AG04450 (cell line): ENCODE measurements at regions of chr6 and their contacts with region 1.

Region 1: DNA sequence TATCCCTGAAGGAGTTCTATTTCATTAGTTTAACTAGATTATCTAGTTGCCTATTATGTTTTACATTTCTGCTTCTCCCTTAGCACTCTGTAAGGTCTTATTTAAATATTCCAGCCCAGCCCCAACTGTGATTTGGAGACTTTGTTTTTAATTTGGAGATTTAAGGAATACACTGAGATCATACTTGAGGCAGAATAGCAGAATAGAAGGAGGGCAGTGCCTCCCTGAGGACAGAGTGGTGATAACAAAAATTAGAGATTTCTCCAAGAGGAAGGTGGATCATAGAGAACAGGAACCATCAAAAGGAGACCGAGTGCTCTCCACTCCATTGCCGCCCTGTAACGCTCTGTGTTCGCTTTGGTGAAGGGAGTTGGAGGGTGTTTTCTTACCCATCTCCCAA is 14.8 kb upstream of the CD164 start:
- DNase-seq: no peak
- H3K4me3 ChIP-seq: no peak overlapping the region
- H3K27ac ChIP-seq: no peak overlapping the region
- H3K27me3 ChIP-seq: peaks cover 7% of the 10 kb centered on the region
- CTCF ChIP-seq: peak; percentile 64

Region 2: DNA sequence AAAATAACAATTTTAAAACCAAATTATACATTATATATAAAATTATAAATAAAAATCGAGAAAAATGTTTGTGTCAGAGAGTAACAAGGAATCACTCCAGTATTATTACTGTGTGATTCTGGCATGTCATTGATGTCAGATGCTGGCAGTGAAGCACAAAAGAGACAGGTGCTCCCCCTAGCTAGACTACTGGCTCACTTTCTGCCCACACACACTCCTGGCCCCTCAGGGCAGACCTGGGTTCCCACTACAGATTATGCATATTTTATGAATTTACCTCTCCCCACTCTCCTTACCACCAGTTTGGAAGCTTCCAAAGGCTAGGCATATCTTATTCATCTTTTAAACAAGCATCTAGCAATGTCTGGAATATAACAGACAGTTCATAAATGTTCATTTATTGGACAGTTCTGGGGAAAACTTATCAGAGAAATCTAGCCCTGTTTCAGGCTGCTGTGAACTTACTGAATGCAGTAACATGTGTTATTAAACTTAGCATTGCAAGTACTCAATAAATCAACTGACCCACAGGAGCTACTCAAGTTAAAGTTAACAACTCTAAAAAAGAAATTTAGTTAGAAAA is 1149.0 kb before region 1 on chr6:
- CTCF ChIA-PET with region 1: interaction called, 10 read pairs
- POLR2A ChIA-PET with region 1: no interaction called
- DNase-seq: no peak
- H3K4me3 ChIP-seq: no peak overlapping the region
- H3K27ac ChIP-seq: no peak overlapping the region
- H3K27me3 ChIP-seq: no peaks in the 10 kb centered on the region
- CTCF ChIP-seq: no peak

Region 3: DNA sequence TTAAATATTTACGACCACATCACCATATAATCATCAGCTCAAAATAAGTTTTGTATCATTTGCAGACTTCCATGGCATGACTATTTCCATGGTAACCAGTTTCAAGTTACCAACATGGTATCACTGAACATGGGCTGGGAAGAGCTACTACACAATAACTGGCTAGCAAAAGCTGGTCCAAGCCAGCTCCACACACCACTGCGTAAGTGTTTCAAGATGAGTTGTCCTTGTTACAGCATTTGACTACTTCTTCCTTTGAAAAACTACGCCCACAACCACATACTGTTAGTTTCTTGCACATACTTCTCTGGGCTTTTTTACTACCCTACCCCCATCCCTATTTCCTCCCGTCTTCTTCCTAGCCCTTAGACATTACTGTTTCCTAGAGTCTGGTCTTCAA is 23.3 kb before region 1 on chr6:
- CTCF ChIA-PET with region 1: no interaction called
- POLR2A ChIA-PET with region 1: no interaction called
- DNase-seq: no peak
- H3K4me3 ChIP-seq: no peak overlapping the region
- H3K27ac ChIP-seq: no peak overlapping the region
- H3K27me3 ChIP-seq: no peaks in the 10 kb centered on the region
- CTCF ChIP-seq: no peak

Region 4: DNA sequence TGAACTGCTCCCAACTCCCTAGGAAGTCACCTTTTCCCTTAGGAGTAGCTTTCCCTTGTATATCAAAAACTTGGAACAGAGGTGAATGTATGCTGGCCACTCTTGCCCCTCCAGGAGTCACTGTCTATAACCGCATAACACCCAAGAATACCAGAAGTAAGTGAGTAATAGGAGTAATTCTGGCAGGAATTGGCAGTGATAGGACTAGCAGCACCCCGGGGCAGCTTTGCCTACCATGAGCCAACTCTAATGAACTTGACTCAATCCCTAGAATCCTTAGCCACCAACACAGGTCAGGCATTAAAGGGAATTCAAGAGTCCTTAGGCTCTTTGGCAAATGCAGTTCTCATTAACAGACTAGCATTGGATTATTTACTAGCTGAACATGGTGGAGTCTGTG is 14.0 kb after region 1 on chr6:
- CTCF ChIA-PET with region 1: no interaction called
- POLR2A ChIA-PET with region 1: no interaction called
- DNase-seq: no peak
- H3K4me3 ChIP-seq: no peak overlapping the region
- H3K27ac ChIP-seq: no peak overlapping the region
- H3K27me3 ChIP-seq: peaks cover 13% of the 10 kb centered on the region
- CTCF ChIP-seq: no peak